ENCODE measurements at regions of chr6 and their contacts with region 1.

Region 1: GRCh38 chr6:150142670-150143515 is at the start of gene PPP1R14C:
- DNase-seq: no peak
- H3K4me3 ChIP-seq: peak within 1 kb of the TSS; percentile 63 to 75 (median 67)
- H3K27ac ChIP-seq: peak within 1 kb of the TSS; percentile 43 to 74 (median 73)
- H3K4me1 ChIP-seq: peaks cover 11 to 45% (median 26%) of the 10 kb centered on the region in 3 donors
- H3K27me3 ChIP-seq: peaks cover 0 to 80% (median 8%) of the 10 kb centered on the region in 4 donors
- CTCF ChIP-seq: no peak
- POLR2A ChIP-seq: peak in 1 of 4 donors; percentile 63
- total RNA-seq, gene PPP1R14C: 9.3 to 27.8 (median 21.3) TPM

Region 2: DNA sequence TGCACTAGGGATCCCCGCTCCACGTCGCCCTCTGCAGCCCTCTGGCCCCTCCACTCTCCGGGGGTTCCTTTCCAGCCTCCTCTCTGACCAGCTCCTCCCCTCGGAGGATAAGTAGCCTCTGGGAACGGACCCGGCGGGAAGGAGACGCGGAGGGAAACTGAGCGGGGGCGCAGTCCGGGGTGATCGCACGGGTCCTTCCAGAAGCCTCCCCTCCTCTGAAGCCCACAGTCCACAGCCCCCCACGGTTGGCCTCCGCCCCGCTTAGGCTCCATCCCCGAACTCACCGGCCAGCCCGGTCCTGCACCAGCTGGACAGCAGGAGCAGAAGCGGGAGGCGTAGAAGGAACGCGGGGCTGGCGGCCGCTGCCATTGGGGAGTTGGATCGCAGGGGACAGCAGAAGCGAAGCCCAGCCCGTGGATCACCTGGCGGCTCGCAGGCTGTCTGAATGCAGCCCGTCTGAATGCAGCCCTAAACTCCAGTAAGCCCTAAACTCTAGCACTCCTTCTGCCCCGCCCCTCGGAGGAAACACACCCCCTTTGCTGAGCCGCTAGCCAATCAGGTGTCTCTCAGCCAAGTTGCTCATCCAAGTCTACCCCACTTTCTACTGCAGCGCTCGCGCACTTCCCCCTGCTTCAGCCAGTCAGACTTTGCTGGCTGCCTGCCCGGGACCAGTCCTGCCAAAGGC is 220.1 kb before region 1 on chr6 and contains the start of gene RAET1G:
- intact Hi-C with region 1: no loop called
- DNase-seq: peak; percentile 50
- H3K4me3 ChIP-seq: peak within 1 kb of the TSS; percentile 46 to 71 (median 60)
- H3K27ac ChIP-seq: peak within 1 kb of the TSS in 3 of 4 donors; percentile 71 to 78 (median 75)
- H3K4me1 ChIP-seq: peaks cover 16 to 52% (median 30%) of the 10 kb centered on the region in 3 donors
- H3K27me3 ChIP-seq: peaks cover 0 to 21% (median 0%) of the 10 kb centered on the region in 4 donors
- CTCF ChIP-seq: peak in 1 of 6 experiments; percentile 3
- POLR2A ChIP-seq: peak in 2 of 4 donors; percentile 61 to 75
- total RNA-seq, gene RAET1G: 9.0 to 26.8 (median 13.5) TPM

Region 3: GRCh38 chr6:149941583-149942431 is 201.1 kb before region 1 on chr6 and contains the start of gene ULBP2:
- intact Hi-C with region 1: no loop called
- DNase-seq: peak; percentile 18
- H3K4me3 ChIP-seq: peak within 1 kb of the TSS; percentile 26 to 67 (median 53)
- H3K27ac ChIP-seq: peak within 1 kb of the TSS; percentile 43 to 72 (median 52)
- H3K4me1 ChIP-seq: peaks cover 20 to 40% (median 24%) of the 10 kb centered on the region in 3 donors
- H3K27me3 ChIP-seq: peaks cover 8 to 63% (median 30%) of the 10 kb centered on the region in 4 donors
- CTCF ChIP-seq: no peak
- POLR2A ChIP-seq: peak in 1 of 4 donors; percentile 55
- total RNA-seq, gene ULBP2: 2.9 to 11.1 (median 4.6) TPM

Region 4: GRCh38 chr6:150250826-150251225 is 107.9 kb after region 1 on chr6:
- intact Hi-C with region 1: loop called (anchors 10 kb)
- DNase-seq: no peak
- H3K4me3 ChIP-seq: no peak overlapping the region
- H3K27ac ChIP-seq: peak overlapping the region in 2 of 4 donors; percentile 18 to 30
- H3K4me1 ChIP-seq: peaks cover 0 to 43% (median 13%) of the 10 kb centered on the region in 3 donors
- H3K27me3 ChIP-seq: peaks cover 0 to 11% (median 0%) of the 10 kb centered on the region in 4 donors
- CTCF ChIP-seq: no peak
- POLR2A ChIP-seq: no peak

Region 5: DNA sequence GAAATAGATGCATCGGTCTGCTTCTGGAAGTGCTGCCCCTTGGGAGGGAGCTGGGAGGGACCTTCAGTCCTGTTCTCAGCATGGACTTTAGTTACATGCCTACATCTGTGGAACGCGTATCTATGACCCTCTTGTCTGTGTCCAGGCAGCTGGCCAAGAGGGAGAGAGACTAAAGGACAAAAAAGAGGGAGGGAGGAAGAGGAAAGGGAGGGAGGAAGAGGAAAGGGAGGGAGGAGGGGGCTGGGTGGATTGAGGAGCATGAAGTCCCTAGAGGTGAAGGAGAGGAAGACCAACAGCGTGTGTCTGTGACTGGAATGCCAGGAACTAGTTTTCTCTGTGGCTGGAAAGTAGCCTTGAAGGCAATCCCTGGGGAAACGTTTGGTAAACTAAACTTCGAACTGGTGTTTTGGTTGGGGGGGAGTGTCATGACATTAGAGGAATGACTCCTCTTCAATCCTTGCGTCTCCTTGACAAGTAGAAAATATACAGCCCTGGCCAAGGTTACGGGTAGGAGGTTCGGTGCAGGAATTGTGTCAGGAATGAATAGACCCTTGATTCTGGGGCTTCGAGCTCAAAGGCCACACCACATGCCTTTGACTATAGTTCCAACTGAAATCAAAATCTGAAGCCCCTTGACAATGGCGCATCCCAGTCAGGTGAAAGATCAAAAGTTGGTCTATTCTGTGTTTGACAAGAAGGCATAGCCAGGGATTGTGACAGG is 404.8 kb after region 1 on chr6:
- intact Hi-C with region 1: no loop called
- DNase-seq: no peak
- H3K4me3 ChIP-seq: no peak overlapping the region
- H3K27ac ChIP-seq: no peak overlapping the region
- H3K4me1 ChIP-seq: peaks cover 0 to 13% (median 0%) of the 10 kb centered on the region in 3 donors
- H3K27me3 ChIP-seq: peaks cover 0 to 6% (median 0%) of the 10 kb centered on the region in 4 donors
- CTCF ChIP-seq: no peak
- POLR2A ChIP-seq: no peak